ENCODE measurements at regions of chr5 and their contacts with region 1.

Region 1: GRCh38 chr5:82719368-82719767 is 357.8 kb downstream of the TMEM167A start:
- DNase-seq: peak in 4 of 5 donors; percentile 13 to 47 (median 26)
- ATAC-seq: peak in 3 of 4 donors; percentile 71 to 92 (median 79)
- H3K4me3 ChIP-seq: no peak overlapping the region
- H3K27ac ChIP-seq: no peak overlapping the region
- H3K4me1 ChIP-seq: peaks cover 0 to 9% (median 0%) of the 10 kb centered on the region in 12 donors
- H3K27me3 ChIP-seq: no peaks in the 10 kb centered on the region
- CTCF ChIP-seq: no peak
- POLR2A ChIP-seq: no peak

Region 2: DNA sequence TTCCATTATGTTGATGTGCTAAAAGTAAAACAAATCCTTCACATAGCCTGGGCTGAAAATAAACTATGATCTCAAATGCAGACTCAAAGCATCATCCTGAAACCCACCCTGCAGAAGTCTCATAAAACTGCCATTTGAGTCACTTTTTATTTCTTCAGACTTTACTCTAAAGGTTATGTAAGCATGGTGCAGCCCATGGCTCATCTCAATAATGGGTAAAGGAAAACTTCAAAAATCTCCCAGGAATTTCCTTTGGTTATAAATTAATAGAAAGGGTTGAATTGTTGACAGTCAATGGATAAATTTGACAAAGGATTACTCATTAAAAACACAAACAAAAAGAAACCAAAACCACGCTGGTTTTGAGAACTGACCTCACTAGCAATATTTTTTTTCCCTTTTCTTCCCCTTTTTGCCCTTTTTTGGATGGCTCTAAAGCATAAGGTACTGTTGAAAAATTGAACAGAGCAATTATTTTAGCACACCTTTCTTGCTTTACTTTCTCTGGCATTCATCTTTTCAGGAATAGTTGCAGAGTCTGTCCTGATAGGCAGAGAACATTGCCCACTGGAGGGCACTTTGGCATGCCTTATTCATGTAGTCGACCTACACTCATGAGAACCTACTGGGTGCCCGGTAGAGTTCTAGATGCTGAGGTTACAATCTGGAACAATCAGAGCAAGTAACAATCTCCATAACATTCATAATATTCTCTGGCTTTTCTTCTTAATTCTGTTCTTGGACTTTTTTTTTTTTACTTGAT is 166.4 kb after region 1 on chr5:
- intact Hi-C with region 1: loop called in 1 of 10 experiments (anchors 10 kb)
- DNase-seq: no peak
- ATAC-seq: no peak
- H3K4me3 ChIP-seq: no peak overlapping the region
- H3K27ac ChIP-seq: no peak overlapping the region
- H3K4me1 ChIP-seq: peaks cover 0 to 24% (median 0%) of the 10 kb centered on the region in 12 donors
- H3K27me3 ChIP-seq: no peaks in the 10 kb centered on the region
- CTCF ChIP-seq: no peak
- POLR2A ChIP-seq: no peak

Measured in heart left ventricle (tissue), 16 donors.